ENCODE measurements at regions of chr22 and their contacts with region 1.

Region 1: GRCh38 chr22:40583053-40583741 is 53.3 kb downstream of the MRTFA start:
- DNase-seq: no peak
- ATAC-seq: no peak
- H3K4me3 ChIP-seq: no peak overlapping the region
- H3K4me3 Mint-ChIP-seq: peak overlapping the region in 1 of 10 donors; percentile 13
- H3K27ac ChIP-seq: no peak overlapping the region
- H3K27ac Mint-ChIP-seq: peak overlapping the region in 7 of 9 donors; percentile 6 to 60 (median 33)
- H3K4me1 ChIP-seq: peaks cover 0 to 8% of the 10 kb centered on the region in 2 donors
- H3K4me1 Mint-ChIP-seq: peaks cover 9 to 52% (median 37%) of the 10 kb centered on the region in 7 donors
- H3K27me3 ChIP-seq: no peaks in the 10 kb centered on the region
- H3K27me3 Mint-ChIP-seq: no peaks in the 10 kb centered on the region

Region 2: DNA sequence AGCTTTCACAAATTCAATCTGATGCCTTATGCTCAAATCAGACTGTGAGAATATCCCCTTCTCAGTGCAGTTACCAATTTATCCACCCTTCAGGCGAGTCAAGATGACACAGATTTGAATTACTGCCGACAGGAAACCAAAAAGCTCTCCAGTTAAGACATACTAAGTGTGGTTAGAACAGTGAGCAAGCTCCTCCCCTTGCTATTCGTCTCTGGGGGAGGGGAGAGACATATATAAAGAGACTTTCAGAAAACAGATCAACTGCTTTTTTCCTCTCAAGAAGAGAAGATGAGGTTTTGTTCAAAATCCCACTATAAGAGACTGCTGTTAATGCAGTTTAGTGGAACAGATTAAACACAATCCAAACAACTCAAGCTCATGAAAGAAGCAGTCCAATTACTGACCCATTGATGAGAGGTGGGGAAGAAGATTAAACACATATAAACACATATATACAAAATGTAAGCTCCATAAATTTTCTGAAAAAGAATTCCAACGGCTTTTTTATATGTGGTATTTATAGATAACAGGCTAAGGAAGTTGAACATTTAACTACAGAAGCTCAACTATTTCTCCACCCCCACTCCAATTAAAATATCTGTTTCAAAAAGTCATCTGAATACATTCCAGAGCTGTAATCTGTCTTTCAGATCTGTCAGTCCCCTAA is 49.4 kb before region 1 on chr22:
- CTCF ChIA-PET with region 1: no interaction called
- POLR2A ChIA-PET with region 1: interaction called, 3 read pairs
- intact Hi-C with region 1: loop called (anchors 2 to 5 kb)
- DNase-seq: peak in 7 of 9 donors; percentile 71 to 85 (median 81)
- ATAC-seq: peak; percentile 99
- H3K4me3 ChIP-seq: peak overlapping the region; percentile 53
- H3K4me3 Mint-ChIP-seq: peak overlapping the region; percentile 78 to 96 (median 89)
- H3K27ac ChIP-seq: peak overlapping the region; percentile 64
- H3K27ac Mint-ChIP-seq: peak overlapping the region; percentile 84 to 96 (median 88)
- H3K4me1 ChIP-seq: peaks cover 28 to 36% of the 10 kb centered on the region in 2 donors
- H3K4me1 Mint-ChIP-seq: peaks cover 49 to 71% (median 64%) of the 10 kb centered on the region in 7 donors
- H3K27me3 ChIP-seq: no peaks in the 10 kb centered on the region
- H3K27me3 Mint-ChIP-seq: no peaks in the 10 kb centered on the region